A673 (cell line): ENCODE measurements at regions of chr6 and their contacts with region 1.

Region 1: DNA sequence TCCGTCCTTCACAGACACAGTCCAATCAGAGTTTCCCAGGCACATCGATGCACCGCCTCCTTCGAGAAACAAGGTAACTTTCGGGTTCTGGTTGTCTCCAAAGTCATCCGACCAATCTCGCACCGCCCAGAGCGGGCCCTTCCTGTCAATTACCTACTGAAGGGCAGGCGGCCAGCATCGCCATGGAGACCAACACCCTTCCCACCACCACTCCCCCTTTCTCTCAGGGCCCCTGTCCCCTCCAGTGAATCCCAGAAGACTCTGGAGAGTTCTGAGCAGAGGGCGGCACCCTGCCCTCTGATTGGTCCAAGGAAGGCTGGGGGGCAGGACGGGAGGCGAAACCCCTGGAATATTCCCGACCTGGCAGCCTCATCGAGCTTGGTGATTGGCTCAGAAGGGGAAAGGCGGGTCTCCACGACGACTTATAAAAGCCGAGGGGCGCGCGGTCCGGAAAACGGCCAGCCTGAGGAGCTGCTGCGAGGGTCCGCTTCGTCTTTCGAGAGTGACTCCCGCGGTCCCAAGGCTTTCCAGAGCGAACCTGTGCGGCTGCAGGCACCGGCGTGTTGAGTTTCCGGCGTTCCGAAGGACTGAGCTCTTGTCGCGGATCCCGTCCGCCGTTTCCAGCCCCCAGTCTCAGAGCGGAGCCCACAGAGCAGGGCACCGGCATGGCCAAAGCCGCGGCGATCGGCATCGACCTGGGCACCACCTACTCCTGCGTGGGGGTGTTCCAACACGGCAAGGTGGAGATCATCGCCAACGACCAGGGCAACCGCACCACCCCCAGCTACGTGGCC is at the start of gene HSPA1B:
- DNase-seq: peak; percentile 100
- H3K4me3 ChIP-seq: peak within 1 kb of the TSS; percentile 67
- H3K27ac ChIP-seq: peak within 1 kb of the TSS; percentile 83
- H3K4me1 ChIP-seq: peaks cover 8% of the 10 kb centered on the region
- H3K27me3 ChIP-seq: no peaks in the 10 kb centered on the region
- CTCF ChIP-seq: no peak
- total RNA-seq, gene HSPA1B: 116 and 131 TPM in 2 replicates

Region 2: GRCh38 chr6:30814136-30815040 is 1013.1 kb before region 1 on chr6:
- CTCF ChIA-PET with region 1: no interaction called
- POLR2A ChIA-PET with region 1: no interaction called
- intact Hi-C with region 1: no loop called
- DNase-seq: peak; percentile 47
- H3K4me3 ChIP-seq: no peak overlapping the region
- H3K27ac ChIP-seq: no peak overlapping the region
- H3K4me1 ChIP-seq: peaks cover 9% of the 10 kb centered on the region
- H3K27me3 ChIP-seq: no peaks in the 10 kb centered on the region
- CTCF ChIP-seq: no peak

Region 3: DNA sequence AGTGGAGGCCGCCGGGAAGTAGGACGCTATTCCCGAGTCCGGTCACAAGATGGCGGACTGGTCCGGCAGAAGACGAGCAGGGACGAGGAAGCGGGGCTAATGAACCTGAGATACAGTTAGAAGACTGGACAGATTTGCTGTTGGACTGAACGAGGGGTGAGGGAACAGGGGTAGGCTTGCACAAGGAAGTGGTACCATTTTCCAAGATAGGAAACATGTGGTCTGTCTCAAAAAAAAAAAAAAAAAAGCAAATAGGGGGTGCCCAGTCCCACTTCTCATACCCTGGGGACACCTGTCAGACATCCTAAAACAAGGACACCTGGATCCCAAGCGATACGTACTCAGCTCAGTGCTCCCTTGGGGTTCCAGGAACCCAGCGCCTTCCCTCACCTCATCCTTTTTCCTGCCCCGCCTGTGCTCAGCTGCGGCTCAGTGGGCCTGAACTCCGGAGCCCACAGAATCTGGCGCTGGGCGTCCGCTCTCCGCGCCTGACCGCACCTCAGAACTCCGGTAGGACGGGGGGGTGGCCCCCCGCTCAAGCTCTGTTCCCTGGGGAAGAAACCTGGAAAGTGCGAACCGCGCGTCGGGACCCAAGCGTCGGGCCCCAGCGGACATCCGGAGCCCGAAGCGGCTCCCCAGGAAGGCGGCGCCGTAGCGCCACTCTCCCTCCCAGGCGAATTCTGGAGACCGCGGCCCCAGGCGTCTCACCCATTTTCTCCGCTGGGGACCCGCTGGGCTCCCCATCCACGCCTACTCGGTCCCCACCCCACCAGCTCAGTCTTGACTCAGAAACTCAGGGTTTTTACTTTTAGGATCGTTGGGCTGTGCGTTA is 146.4 kb before region 1 on chr6 and contains the start of gene LY6G5C:
- CTCF ChIA-PET with region 1: no interaction called
- POLR2A ChIA-PET with region 1: no interaction called
- intact Hi-C with region 1: loop called (anchors 2 kb)
- DNase-seq: peak; percentile 86
- H3K4me3 ChIP-seq: peak within 1 kb of the TSS; percentile 53
- H3K27ac ChIP-seq: peak within 1 kb of the TSS; percentile 68
- H3K4me1 ChIP-seq: no peaks in the 10 kb centered on the region
- H3K27me3 ChIP-seq: no peaks in the 10 kb centered on the region
- CTCF ChIP-seq: peak; percentile 70; the same call in 1 of the 2 replicates
- total RNA-seq, gene LY6G5C: 3.9 and 6.8 TPM in 2 replicates

Region 4: DNA sequence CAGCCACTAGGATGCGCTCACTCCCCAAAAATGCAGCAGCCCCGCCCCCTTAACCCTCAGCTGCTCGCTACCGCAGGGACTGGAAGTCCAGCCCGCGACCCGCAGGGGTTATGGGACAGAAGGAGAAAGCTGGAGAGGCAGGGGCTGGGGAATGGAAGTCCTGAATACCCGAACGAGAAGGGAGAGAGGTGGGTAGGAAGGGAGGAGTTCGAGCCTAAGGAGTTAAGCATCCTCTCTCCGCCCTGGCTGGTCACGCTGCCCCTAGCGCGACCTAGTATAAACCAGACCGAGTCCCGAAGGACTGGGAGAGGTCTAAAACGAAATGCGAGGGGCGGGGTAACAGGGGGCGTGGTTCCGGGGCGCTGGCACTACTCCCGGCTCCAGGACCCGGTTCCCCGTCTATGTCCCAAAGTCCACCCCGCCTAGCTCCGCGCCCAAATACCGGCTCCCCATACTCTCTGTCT is 97.9 kb before region 1 on chr6:
- CTCF ChIA-PET with region 1: interaction called, 14 read pairs
- POLR2A ChIA-PET with region 1: interaction called, 4 read pairs
- intact Hi-C with region 1: loop called (anchors 2 kb)
- DNase-seq: peak; percentile 85
- H3K4me3 ChIP-seq: peak overlapping the region; percentile 76
- H3K27ac ChIP-seq: peak overlapping the region; percentile 70
- H3K4me1 ChIP-seq: peaks cover 15% of the 10 kb centered on the region
- H3K27me3 ChIP-seq: no peaks in the 10 kb centered on the region
- CTCF ChIP-seq: no peak; the same call in 1 of the 2 replicates

Region 5: GRCh38 chr6:31815025-31815838 is 12.3 kb before region 1 on chr6 and contains the starts of genes HSPA1A and HSPA1L:
- CTCF ChIA-PET with region 1: interaction called, 15 read pairs
- POLR2A ChIA-PET with region 1: interaction called, 3 read pairs
- intact Hi-C with region 1: no loop called
- DNase-seq: peak; percentile 99
- H3K4me3 ChIP-seq: peak within 1 kb of the TSS; percentile 65
- H3K27ac ChIP-seq: peak within 1 kb of the TSS; percentile 99
- H3K4me1 ChIP-seq: peaks cover 14% of the 10 kb centered on the region
- H3K27me3 ChIP-seq: no peaks in the 10 kb centered on the region
- CTCF ChIP-seq: no peak
- total RNA-seq, gene HSPA1A: 113 and 129 TPM in 2 replicates
- total RNA-seq, gene HSPA1L: 1.1 and 1.4 TPM in 2 replicates

Region 6: DNA sequence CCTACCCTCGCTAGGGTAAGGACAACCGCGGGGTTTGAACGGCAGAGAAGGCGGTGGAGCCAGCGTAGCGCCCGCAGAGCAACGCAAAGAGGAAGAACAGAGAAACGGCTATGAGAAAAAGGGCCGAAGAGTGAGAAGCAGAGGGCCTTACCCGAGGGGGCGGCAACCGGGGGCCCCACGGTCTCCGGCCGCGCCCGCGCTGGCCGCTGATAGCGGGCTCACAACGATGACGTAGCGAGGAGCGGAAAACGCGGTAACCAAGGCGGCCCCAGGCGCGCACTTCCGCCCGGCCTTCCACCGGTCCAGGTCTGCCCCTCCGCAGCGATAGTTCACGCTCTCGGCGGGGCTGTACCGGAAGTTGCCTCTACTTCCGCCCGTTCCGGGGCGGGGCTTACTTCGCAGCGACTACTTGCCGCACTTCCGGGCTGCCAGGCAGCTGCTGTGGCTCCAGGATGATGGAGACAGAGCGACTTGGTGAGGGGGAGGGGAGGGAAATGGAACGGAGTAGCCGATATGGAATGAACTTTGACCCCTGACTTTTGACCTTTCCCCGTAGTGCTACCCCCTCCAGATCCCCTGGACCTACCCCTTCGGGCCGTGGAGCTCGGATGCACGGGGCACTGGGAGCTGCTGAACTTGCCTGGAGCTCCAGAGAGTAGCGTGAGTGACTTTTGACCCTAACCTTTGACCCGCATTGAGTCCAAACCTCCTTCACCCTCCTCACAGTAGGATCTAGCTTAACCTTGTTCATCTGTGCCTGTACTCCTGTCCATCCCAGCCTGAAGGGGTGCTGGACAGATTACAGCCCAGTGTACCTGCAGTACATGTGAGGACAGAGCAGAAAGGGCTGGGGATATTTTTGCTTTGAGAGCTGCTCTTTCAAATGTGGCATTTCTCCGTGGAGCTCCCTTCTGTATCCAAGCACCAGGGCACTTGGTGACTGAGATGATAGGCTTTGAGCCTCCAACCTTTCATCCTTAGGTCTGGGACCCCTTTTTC is 131.6 kb after region 1 on chr6 and contains the starts of genes NELFE and SKIC2:
- CTCF ChIA-PET with region 1: no interaction called
- POLR2A ChIA-PET with region 1: no interaction called
- intact Hi-C with region 1: no loop called
- DNase-seq: peak; percentile 99
- H3K4me3 ChIP-seq: peak within 1 kb of the TSS; percentile 88
- H3K27ac ChIP-seq: peak within 1 kb of the TSS; percentile 88
- H3K4me1 ChIP-seq: peaks cover 14% of the 10 kb centered on the region
- H3K27me3 ChIP-seq: no peaks in the 10 kb centered on the region
- CTCF ChIP-seq: no peak
- total RNA-seq, gene NELFE: 94.3 and 96.8 TPM in 2 replicates
- total RNA-seq, gene SKIC2: 64.2 and 71.3 TPM in 2 replicates

Region 7: GRCh38 chr6:32175711-32176475 is 348.4 kb after region 1 on chr6 and contains the start of gene AGPAT1:
- CTCF ChIA-PET with region 1: no interaction called
- POLR2A ChIA-PET with region 1: no interaction called
- intact Hi-C with region 1: no loop called
- DNase-seq: peak; percentile 97
- H3K4me3 ChIP-seq: peak within 1 kb of the TSS; percentile 97
- H3K27ac ChIP-seq: peak within 1 kb of the TSS; percentile 97
- H3K4me1 ChIP-seq: peaks cover 25% of the 10 kb centered on the region
- H3K27me3 ChIP-seq: no peaks in the 10 kb centered on the region
- CTCF ChIP-seq: no peak
- total RNA-seq, gene AGPAT1: 102 and 108 TPM in 2 replicates